Left cardiac atrium (tissue), 4 donors: ENCODE measurements at regions of chr5 and their contacts with region 1.

Region 1: GRCh38 chr5:78547731-78548615 is 100.6 kb downstream of the LHFPL2 start:
- DNase-seq: peak; percentile 90
- ATAC-seq: peak; percentile 86 to 91

Region 2: DNA sequence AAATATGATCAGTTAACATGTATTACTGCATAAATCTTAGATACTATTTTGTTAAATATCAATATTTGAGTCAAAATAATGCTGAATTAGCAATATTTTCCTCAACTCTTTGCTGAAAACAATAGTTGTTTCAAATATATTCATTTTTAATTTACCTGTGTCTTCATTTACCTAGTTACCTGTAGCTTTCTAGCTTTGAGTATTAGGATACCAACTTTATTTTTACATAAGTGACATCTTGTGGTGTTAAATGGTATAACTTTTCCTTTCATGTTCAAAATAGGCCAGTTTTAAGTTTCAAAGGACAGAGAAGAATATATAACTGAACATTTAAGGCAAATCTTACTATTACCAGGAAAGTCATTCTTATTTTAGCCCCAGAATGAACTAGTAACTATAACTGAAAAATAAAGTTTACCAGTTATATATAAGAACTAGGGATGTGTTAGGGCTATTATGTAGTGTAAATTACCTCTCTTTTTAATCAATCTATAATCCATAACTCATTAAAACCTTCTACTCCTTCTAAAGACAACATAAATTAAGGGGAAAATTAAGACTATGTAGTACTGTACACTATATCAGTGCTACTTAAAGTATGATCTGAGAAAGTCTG is 278.8 kb before region 1 on chr5:
- intact Hi-C with region 1: no loop called
- DNase-seq: no peak
- ATAC-seq: no peak

Region 3: GRCh38 chr5:78594610-78595457 is 46.9 kb after region 1 on chr5:
- intact Hi-C with region 1: loop called in 1 of 2 experiments (anchors 5 kb)
- DNase-seq: peak; percentile 65
- ATAC-seq: peak; percentile 76 to 89

Region 4: GRCh38 chr5:78648359-78649210 is 100.6 kb after region 1 on chr5 and contains the start of gene LHFPL2:
- intact Hi-C with region 1: loop called in 1 of 2 experiments (anchors 10 kb)
- DNase-seq: peak; percentile 87
- ATAC-seq: peak; percentile 89 to 91
- total RNA-seq, gene LHFPL2: 12.5 to 23.9 TPM

Region 5: GRCh38 chr5:78886341-78887230 is 338.6 kb after region 1 on chr5:
- intact Hi-C with region 1: loop called in 1 of 2 experiments (anchors 10 kb)
- DNase-seq: no peak
- ATAC-seq: no peak